ENCODE measurements at regions of chr7 and their contacts with region 1.

Region 1: GRCh38 chr7:44581879-44582603 is at the start of gene TMED4:
- DNase-seq: peak; percentile 97
- H3K4me3 ChIP-seq: peak within 1 kb of the TSS; percentile 94
- CTCF ChIP-seq: no peak

Region 2: DNA sequence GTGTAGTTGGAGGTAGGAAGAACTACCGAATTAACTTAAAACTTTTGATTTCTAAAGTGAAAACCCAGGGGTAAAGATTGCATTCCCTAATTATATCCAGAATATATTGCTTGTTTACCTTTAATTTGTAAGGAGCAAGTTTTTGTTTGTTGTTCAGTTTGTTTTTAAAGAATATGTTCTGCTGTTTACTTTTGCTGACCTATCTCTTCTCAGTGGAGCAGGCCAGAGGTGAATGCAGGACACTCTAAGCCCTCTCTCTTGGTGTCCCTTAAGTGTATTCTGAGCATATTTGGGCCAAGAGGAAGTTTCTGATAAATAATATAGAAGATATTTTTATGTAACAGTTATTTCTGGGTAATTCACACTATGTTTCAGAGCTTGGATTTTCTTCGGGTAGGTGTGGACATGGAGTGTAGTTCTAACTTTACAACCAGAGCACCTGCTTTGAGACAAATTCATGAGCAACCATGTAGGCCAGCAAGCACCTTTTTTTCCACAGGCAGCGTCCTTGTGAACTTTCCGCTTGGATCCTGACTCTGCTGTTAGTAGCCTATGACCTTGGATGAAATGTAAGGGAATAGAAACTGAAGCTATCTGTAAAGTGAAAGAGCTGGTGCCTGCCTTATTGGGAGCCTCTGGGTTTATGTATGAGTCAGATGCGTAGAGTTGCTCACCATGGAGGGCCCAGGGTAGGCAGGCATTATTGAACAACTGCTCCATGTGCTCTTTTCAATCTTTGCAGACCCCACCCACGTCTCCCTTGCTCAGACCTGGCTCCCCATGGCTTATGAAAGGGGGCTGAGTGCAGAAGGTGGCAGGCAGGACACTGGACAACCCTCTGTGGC is 40.5 kb after region 1 on chr7:
- in situ Hi-C with region 1: no loop called
- DNase-seq: no peak
- H3K4me3 ChIP-seq: no peak overlapping the region
- CTCF ChIP-seq: no peak

Region 3: GRCh38 chr7:44824894-44825526 is 243.0 kb after region 1 on chr7:
- in situ Hi-C with region 1: loop called (anchors 25 kb)
- DNase-seq: no peak
- H3K4me3 ChIP-seq: no peak overlapping the region
- CTCF ChIP-seq: no peak

Measured in astrocyte of the cerebellum (primary cell).